ENCODE measurements at regions of chr2 and their contacts with region 1.

Region 1: DNA sequence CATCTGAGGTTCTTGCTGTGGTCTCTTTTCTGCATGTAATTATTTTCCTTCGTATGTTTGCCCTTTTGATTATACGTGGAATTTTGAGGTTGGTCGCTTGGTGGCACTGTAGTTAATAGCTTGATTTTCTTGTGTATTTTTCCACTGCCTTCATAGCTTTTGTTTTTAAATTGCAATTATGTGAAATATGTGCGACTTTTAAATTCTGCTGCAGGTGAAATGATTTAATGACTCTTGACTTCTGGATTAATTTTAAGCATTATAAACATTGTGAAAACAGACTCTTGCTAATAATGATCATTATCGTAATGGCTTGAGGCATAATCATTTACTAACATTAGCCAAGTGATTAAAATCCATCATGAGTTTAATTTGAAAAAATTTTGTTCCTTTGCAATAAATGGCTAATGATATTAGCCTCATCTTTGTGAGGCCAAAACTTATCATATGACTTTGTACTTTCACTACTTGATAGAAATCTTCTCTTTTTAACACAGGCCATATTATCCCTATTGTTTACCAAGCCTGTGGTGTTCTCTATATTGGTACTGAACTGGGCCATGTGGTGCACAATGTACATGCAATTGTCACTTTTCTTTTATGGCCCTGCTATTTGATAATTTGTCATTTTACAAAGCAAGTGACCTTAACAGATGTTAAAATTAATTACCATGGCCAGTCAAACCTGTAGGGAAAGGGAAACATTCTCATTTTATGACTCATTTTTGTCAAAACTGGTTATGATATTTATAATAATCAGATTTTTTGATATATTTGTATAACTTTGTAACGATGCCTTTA is 62.8 kb upstream of the NEUROD1 start:
- DNase-seq: peak; percentile 83
- H3K4me3 ChIP-seq: no peak overlapping the region
- H3K27ac ChIP-seq: peak overlapping the region; percentile 34
- H3K4me1 ChIP-seq: peaks cover 15% of the 10 kb centered on the region
- H3K27me3 ChIP-seq: no peaks in the 10 kb centered on the region
- CTCF ChIP-seq: peak; percentile 37 to 39
- POLR2A ChIP-seq: no peak

Region 2: GRCh38 chr2:181790716-181791649 is 47.9 kb after region 1 on chr2:
- CTCF ChIA-PET with region 1: interaction called, 33 read pairs
- POLR2A ChIA-PET with region 1: no interaction called
- dilution Hi-C with region 1: no loop called
- intact Hi-C with region 1: loop called (anchors 1 kb)
- DNase-seq: peak; percentile 99
- H3K4me3 ChIP-seq: no peak overlapping the region
- H3K27ac ChIP-seq: peak overlapping the region; percentile 96
- H3K4me1 ChIP-seq: peaks cover 45% of the 10 kb centered on the region
- H3K27me3 ChIP-seq: no peaks in the 10 kb centered on the region
- CTCF ChIP-seq: no peak
- POLR2A ChIP-seq: peak; percentile 72

Region 3: DNA sequence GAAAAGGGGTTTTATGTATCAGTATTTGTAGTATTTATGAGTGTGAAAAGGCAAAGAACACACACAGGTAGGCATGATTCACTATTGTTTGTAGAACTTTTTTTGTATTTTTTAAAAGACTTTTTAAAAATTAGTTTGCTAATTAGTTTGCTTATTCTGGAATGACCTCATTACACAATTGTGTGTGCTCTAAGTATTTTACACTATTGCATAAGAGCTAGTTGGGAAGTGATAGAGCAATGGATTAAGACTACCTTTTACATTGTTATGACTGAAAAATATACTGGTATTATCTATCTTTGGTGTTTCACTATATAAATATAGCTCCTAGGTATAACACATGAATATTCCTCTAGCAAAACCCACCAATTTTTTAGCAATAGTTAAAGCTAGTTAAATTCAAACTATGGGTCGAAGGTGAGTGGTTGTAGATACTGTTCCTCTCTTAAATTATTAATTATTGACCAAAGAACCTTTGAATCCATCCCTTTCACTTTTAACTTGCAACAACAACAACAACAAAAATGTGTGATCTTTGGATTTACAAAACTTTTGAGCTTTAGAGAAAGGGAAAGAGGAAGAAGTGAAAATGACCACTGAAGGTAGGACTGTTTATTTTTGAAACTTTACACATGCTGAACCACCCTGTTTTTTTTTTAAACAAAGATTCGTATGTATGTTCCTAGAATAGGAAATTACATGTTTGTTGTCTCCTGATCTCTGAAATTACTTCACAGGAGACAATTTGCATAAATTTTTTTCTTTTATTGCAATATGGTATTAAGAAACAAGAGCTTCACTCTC is 167.1 kb after region 1 on chr2:
- CTCF ChIA-PET with region 1: interaction called, 415 read pairs
- POLR2A ChIA-PET with region 1: no interaction called
- dilution Hi-C with region 1: no loop called
- intact Hi-C with region 1: no loop called
- DNase-seq: no peak
- H3K4me3 ChIP-seq: no peak overlapping the region
- H3K27ac ChIP-seq: no peak overlapping the region
- H3K4me1 ChIP-seq: peaks cover 27% of the 10 kb centered on the region
- H3K27me3 ChIP-seq: no peaks in the 10 kb centered on the region
- CTCF ChIP-seq: no peak
- POLR2A ChIP-seq: no peak

Region 4: DNA sequence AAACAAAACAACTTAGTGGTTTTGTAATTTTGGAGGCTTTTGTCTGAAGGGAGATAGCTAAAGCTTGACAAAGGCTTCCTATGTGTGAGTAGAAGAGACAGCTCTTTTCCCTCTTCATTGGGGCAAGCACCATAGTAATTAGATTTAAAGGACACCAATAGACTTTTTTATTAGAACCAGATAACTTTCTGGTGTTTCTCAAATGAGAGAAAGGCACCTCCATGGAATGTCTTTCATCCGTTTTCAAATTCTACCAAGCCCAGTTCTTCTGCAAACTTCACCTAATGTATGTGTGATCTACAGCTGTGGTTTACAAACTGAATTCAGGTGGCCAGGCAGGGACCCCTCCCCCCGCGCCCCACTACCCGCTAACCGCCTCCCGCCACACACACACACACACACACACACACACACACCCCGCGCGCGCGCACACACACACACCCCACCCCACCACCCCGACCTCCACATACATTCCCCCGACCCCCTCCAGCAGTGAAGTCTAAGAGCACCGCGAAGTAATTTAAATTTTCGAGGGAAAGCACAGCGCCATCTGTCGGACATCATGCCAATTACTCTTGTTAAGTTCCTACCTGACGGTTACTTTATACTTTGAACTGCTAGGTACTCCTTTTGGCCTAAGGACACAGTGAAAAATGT is 210.9 kb after region 1 on chr2:
- CTCF ChIA-PET with region 1: interaction called, 25 read pairs
- POLR2A ChIA-PET with region 1: no interaction called
- dilution Hi-C with region 1: no loop called
- intact Hi-C with region 1: loop called (anchors 1 kb)
- DNase-seq: peak; percentile 81
- H3K4me3 ChIP-seq: peak overlapping the region; percentile 33 to 42 (median 39)
- H3K27ac ChIP-seq: peak overlapping the region; percentile 74
- H3K4me1 ChIP-seq: peaks cover 29% of the 10 kb centered on the region
- H3K27me3 ChIP-seq: no peaks in the 10 kb centered on the region
- CTCF ChIP-seq: peak; percentile 47 to 63
- POLR2A ChIP-seq: no peak